Heart right ventricle (tissue), 16 donors: ENCODE measurements at regions of chrX and their contacts with region 1.

Region 1: DNA sequence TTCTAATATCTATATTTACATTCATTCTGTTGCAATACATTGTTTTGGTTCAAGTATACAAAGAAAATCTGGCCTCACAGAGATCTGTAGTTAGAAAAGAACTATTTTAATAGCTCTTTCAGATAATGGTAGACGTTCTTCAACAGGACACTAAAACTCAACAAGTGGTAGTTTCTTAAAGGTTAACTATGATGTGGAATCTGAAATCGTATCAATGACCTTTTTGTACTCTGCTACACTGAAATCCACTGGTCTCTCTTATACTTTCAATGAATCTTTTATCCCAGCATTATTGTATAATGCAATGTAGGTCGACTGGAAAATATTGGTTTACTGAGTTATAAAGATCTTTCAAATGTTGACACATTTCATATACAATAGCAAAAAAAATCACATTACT is 12.7 kb downstream of the TMEM185A start:
- DNase-seq: no peak
- ATAC-seq: no peak
- H3K4me3 ChIP-seq: no peak overlapping the region
- H3K27ac ChIP-seq: no peak overlapping the region
- H3K4me1 ChIP-seq: peaks cover 0 to 12% (median 0%) of the 10 kb centered on the region in 9 donors
- H3K27me3 ChIP-seq: no peaks in the 10 kb centered on the region
- CTCF ChIP-seq: no peak

Region 2: DNA sequence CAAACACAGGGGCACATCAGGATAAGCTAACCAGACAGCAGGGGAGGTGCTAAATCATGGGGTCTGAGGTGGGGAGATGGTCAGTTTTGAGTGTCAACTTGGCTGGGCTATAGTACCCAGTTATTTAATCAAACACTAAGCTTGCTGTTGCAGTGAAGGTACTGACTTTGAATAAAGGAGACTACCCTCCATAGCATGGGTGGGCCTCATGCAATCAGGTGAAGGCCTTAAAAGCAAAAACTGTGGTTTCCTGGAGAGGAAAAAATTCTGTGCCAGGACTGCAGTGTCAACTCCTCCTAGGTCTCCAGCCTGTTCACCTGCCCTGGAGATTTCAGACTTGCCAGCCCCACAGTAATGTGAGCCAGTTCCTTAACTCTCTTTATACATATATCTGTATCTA is 11.2 kb before region 1 on chrX:
- intact Hi-C with region 1: no loop called
- DNase-seq: no peak
- ATAC-seq: no peak
- H3K4me3 ChIP-seq: no peak overlapping the region
- H3K27ac ChIP-seq: no peak overlapping the region
- H3K4me1 ChIP-seq: peaks cover 0 to 11% (median 0%) of the 10 kb centered on the region in 9 donors
- H3K27me3 ChIP-seq: no peaks in the 10 kb centered on the region
- CTCF ChIP-seq: no peak

Region 3: GRCh38 chrX:149648932-149649331 is 30.1 kb after region 1 on chrX:
- intact Hi-C with region 1: loop called in 1 of 10 experiments (anchors 1 kb)
- DNase-seq: no peak
- ATAC-seq: no peak
- H3K4me3 ChIP-seq: no peak overlapping the region
- H3K27ac ChIP-seq: no peak overlapping the region
- H3K4me1 ChIP-seq: no peaks in the 10 kb centered on the region
- H3K27me3 ChIP-seq: no peaks in the 10 kb centered on the region
- CTCF ChIP-seq: peak in 1 of 9 donors; percentile 8